ENCODE measurements at regions of chr16 and their contacts with region 1.

Region 1: DNA sequence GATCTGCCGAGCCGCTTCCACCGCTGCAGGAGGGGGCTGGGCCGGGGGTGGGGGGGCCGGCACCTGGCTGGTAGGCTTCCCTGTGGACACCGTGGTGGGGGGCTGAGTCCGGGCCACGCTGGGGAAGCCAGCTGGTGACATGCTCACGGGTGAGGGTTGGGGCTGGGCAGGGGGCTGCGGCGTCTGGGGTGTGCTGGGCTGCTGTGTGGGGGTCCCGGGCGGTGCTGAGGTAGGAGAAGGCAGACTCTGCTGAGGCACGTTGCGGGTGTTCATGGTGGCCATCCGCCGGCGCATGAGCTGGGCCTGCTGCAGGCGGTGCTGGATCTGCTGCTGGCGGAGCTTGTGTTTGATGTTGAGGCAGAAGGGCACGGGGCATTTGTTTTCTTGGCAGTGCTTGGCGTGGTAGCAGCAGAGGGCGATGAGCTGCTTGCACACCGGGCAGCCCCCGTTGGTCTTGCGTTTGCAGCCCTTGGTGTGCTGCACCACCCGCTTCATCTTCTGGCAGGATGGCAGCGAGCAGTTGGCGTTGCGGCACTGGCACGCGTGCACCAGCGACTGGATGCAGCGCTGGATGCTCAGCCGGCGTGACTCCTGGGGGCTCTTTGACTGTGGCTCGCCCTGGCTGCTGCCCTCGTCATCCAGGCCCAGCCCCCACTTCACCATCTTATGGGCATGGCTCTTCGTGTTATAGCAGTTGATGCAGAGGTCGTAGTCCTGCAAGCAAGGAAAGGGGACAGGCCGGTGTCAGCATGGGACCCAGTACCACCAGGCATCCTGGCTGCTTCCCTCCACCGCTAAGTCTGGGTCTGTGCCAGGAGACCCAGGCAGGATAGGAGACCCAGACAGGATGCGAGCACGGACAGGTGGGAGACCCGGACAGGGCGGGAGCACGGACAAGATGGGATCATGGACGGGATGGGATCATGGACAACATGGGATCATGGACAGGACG is 12.1 kb upstream of the TRAP1 start:
- DNase-seq: no peak
- H3K4me3 ChIP-seq: no peak overlapping the region
- H3K27ac ChIP-seq: no peak overlapping the region
- H3K4me1 ChIP-seq: no peaks in the 10 kb centered on the region
- H3K27me3 ChIP-seq: no peaks in the 10 kb centered on the region
- CTCF ChIP-seq: no peak

Region 2: DNA sequence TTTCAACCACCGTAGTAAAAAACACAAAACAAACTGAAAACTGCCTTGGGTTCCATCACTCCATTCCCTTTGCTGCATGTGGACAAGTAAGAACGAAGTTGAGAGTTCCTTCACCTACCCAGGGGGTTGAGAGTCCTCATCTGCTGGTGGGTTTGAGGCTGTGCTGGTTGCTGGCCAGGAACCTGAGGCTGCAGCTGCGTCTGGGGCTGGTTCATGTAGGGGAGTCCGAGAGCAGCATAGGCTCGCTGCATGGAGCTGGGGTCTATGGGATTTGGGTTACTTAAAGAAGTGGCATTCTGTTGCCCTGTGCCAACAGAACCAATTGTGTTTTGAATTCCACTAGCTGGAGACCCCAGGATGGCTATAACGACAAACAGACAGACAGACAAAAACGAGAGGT is 53.1 kb after region 1 on chr16:
- CTCF ChIA-PET with region 1: no interaction called
- POLR2A ChIA-PET with region 1: interaction called, 12 read pairs
- intact Hi-C with region 1: no loop called
- DNase-seq: no peak
- H3K4me3 ChIP-seq: no peak overlapping the region
- H3K27ac ChIP-seq: no peak overlapping the region
- H3K4me1 ChIP-seq: no peaks in the 10 kb centered on the region
- H3K27me3 ChIP-seq: no peaks in the 10 kb centered on the region
- CTCF ChIP-seq: no peak

Region 3: DNA sequence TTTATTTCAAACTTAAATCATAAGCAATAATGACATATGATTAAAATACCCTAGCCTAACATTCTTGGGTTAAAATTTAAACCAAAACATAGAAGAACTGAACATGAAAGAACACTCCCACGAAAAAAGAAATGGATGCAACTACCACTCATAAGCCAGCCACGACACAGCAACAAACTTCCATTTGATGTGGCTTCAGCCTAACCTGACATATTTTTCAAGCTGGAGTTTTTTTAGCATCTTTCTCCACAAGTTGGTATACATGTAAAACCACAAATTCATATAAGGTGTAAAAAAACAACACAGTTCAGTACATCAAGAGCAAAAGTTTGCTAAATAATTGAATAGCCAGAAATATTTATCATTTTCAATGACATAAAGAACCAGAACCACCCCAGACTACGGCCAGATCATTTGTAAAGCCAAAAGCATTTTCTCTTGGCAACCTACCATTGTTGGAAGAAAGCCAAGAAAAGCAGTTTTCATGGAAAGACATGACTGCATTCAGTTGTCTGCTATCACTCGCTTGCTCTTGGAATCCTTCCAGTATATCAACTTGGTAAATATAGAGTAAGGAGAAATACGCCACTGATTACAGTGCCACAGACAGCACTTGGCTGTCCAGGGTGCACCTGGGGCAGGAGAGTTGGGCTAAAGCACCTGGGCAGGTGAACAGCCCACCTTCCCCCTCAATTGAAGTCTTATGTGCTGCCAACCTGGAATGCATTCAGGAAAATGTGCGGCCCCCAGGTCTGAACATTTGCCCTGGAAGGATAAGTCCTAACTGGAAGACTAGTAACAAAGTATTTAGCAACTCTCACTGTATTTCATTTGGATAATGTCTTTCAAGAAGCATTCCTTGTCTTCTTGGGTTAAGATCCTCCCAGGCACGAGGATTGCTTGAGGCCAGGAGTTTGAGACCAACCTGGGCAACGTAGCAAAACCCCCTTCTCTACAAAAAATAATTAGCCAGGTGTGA is 90.6 kb after region 1 on chr16:
- CTCF ChIA-PET with region 1: no interaction called
- POLR2A ChIA-PET with region 1: no interaction called
- intact Hi-C with region 1: no loop called
- DNase-seq: peak; percentile 80
- H3K4me3 ChIP-seq: no peak overlapping the region
- H3K27ac ChIP-seq: no peak overlapping the region
- H3K4me1 ChIP-seq: peaks cover 26% of the 10 kb centered on the region
- H3K27me3 ChIP-seq: no peaks in the 10 kb centered on the region
- CTCF ChIP-seq: no peak

Region 4: GRCh38 chr16:3842994-3843393 is 113.6 kb after region 1 on chr16:
- CTCF ChIA-PET with region 1: no interaction called
- POLR2A ChIA-PET with region 1: interaction called, 19 read pairs
- intact Hi-C with region 1: no loop called
- DNase-seq: peak; percentile 31
- H3K4me3 ChIP-seq: no peak overlapping the region
- H3K27ac ChIP-seq: no peak overlapping the region
- H3K4me1 ChIP-seq: peaks cover 67% of the 10 kb centered on the region
- H3K27me3 ChIP-seq: no peaks in the 10 kb centered on the region
- CTCF ChIP-seq: no peak